ENCODE measurements at regions of chr20 and their contacts with region 1.

Region 1: GRCh38 chr20:5703681-5704101 is 46.5 kb upstream of the SHLD1 start:
- DNase-seq: no peak
- H3K4me3 ChIP-seq: no peak overlapping the region
- H3K27ac ChIP-seq: no peak overlapping the region
- H3K4me1 ChIP-seq: no peaks in the 10 kb centered on the region
- H3K27me3 ChIP-seq: no peaks in the 10 kb centered on the region
- CTCF ChIP-seq: no peak

Region 2: DNA sequence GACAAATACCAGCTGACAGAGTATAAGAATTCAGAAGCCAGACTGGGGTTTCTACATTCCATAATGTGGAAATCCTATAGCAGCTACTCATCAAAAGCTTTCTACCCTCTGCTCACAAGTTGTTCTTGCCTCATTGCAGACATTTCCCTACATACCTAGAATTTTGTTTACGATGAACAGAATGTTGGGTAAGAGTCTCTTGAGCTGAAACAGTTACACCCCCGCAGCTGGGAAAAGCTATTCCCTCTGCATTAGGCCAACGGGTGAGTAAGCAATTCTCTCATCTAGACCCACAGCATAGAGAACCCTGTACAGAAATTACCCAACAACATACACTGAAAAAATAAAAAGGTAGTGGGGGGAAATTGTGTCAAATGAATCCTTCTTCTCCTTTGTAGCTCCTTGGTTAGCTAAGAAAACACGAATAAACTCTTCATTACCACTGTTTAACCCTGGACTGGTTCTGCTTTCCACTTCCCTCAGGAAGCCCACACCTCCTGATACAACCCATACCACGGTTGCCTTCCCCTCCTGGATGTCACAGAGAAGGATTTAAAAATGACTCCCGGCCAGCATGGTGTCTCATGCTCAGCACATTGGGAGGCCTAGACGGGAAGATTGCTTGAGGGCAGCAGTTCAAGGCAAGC is 168.4 kb before region 1 on chr20:
- CTCF ChIA-PET with region 1: no interaction called
- POLR2A ChIA-PET with region 1: no interaction called
- intact Hi-C with region 1: no loop called
- DNase-seq: peak in 1 of 2 experiments; percentile 90
- H3K4me3 ChIP-seq: no peak overlapping the region
- H3K27ac ChIP-seq: no peak overlapping the region
- H3K4me1 ChIP-seq: peaks cover 7% of the 10 kb centered on the region; the same call in 1 of the 2 replicates
- H3K27me3 ChIP-seq: no peaks in the 10 kb centered on the region
- CTCF ChIP-seq: no peak

Region 3: DNA sequence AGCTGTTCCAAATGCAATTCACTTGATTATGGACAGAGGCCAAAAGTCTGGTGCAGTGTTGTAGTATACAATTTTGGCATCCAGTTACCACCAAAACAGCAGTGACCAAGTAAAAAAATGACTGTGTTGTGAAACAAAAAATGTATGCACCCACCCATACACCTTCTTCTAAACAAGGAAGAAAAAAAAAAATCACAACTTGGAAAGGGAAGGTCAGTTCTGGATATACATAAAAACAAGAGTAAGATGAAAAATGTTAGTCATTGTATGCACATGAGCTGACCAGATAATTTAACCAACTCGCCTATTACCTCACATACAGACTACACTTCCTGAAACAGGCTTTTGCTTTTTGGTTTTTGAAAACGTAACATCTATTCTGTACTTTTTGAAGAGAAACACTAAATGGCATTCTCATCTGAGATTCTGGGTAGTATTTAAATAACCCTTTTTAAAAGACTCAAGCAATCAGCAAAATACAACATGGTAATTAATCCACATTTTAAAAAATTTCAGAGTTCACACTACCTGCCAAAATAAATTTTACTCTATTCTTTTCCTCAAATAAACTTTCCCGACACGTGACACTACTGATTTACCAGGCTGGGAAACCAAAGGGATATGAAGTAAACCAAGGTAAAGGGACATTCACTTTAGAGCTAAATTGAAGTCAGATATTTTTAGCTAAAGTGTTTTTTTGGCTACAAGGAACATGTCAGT is 95.1 kb before region 1 on chr20:
- CTCF ChIA-PET with region 1: no interaction called
- POLR2A ChIA-PET with region 1: no interaction called
- intact Hi-C with region 1: no loop called
- DNase-seq: peak in 1 of 2 experiments; percentile 52
- H3K4me3 ChIP-seq: peak overlapping the region; percentile 97; the same call in 1 of the 2 replicates
- H3K27ac ChIP-seq: peak overlapping the region; percentile 64
- H3K4me1 ChIP-seq: peaks cover 29% of the 10 kb centered on the region
- H3K27me3 ChIP-seq: no peaks in the 10 kb centered on the region
- CTCF ChIP-seq: no peak

Region 4: DNA sequence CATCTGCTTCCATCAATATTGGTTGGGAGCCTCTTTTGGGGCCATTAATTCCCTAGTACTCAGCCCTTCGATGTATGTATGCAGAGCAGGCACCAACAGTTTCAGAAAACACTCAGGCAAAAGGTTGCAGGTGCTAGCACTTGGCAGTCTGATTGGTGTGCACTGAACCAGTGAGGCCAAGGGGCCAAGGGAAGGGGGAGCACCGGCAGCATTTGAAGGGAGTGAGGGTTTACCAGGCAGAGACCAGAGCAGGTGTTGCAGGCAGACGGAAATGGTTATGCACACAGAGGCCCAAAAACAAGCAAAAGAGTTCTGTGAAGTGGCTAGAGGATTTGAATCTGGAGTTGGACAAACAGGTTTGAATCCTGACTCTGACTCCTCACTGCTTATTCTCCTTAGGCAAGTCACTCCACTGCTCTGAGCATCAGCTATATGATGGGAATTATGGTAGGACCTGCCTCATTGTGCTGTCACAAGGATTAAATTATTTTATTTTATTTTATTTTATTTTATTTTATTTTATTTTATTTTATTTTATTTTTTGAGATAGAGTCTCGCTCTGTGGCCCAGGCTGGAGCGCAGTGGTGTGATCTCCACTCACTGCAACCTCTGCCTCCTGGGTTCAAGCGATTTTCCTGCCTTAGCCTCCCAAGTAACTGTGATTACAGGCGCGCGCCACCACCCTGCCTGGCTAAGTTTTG is 11.6 kb before region 1 on chr20:
- CTCF ChIA-PET with region 1: no interaction called
- POLR2A ChIA-PET with region 1: interaction called, 20 read pairs
- intact Hi-C with region 1: no loop called
- DNase-seq: no peak
- H3K4me3 ChIP-seq: no peak overlapping the region
- H3K27ac ChIP-seq: no peak overlapping the region
- H3K4me1 ChIP-seq: no peaks in the 10 kb centered on the region
- H3K27me3 ChIP-seq: no peaks in the 10 kb centered on the region
- CTCF ChIP-seq: no peak

Measured in PC-9 (cell line).